ENCODE measurements at regions of chr3 and their contacts with region 1.

Region 1: DNA sequence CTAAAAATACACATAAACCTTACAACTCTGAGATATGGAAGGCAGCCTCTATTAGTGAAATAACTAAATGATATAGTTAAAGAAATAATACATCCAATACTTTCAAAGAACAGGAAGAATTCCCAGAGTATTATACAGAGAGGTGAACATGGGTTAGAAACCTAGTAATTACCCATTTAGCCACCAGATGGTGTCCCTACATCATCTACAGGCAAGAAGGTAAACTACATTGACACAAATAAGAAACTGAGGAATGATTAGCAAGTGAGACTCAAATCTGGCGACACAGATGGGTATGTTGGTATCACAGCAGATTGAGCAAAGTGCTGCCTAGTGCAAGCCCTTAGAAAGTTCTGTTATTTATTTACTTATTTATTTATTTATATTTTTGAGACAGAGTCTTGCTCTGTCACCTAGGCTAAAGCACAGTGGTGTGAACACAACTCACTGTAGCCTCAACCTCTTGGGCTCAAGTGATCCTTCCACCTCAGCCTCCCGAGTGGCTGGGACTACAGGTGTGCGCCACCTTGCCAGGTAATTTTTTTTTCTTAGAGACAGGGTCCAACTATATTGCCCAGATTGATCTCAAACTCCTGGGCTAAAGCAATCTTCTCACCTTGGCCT is 28.2 kb downstream of the NEK4 start:
- DNase-seq: no peak
- H3K4me3 ChIP-seq: no peak overlapping the region
- H3K27ac ChIP-seq: no peak overlapping the region
- H3K27me3 ChIP-seq: no peaks in the 10 kb centered on the region
- CTCF ChIP-seq: peak; percentile 71

Region 2: DNA sequence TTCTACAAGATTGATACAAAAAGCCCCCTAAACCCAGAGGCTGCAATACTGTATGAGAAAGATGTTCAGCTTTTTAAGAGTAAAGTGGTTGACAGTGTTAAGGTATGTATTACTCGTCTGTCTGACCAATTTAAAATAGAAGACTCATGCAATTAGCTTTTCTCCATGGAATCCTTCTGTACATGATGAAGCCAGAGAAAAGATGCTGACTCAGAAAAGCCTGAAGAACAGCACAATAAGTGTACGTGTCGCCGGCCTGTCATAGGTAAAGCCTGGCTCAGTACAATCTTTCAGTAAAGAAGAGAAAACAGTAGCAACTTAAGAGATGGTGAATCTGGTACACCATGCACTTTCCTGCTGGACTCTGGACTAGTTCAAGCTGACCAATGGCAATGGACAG is 11.8 kb after region 1 on chr3:
- CTCF ChIA-PET with region 1: no interaction called
- POLR2A ChIA-PET with region 1: no interaction called
- DNase-seq: no peak
- H3K4me3 ChIP-seq: no peak overlapping the region
- H3K27ac ChIP-seq: no peak overlapping the region
- H3K27me3 ChIP-seq: no peaks in the 10 kb centered on the region
- CTCF ChIP-seq: no peak

Region 3: DNA sequence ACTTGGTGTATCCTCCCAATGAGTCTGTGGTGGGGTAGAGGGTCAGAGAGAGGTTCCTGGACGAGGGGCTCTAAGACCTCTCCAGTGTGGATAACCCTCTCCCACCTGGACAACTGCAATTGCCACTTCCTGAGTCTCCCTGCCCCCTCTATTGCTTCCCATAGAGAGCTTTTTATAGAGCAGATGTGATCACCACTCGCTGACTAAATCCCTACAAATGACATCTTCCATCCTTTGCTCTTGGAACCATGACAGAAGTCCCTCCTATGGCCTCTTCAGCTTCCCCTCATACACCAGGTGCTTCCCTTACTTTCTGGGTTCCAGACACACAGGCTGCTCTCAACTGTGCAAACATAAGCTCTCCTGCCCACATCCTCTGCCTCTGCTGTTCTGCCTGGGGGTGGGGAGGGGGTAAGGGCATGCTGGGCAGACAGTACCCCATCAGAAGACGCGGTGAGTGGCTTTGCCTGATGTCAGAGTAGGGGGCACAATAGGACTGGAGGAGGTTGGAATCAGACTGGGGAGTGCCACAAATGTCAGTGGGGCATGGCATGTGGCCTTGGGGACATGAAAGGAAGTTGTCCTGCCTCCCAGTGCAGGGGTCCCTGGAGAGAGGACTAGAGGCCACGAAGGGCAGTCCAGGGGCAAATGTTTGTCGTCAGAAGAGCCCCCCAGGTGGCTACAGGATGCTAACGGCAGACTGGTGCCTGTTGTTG is 67.3 kb after region 1 on chr3:
- CTCF ChIA-PET with region 1: no interaction called
- POLR2A ChIA-PET with region 1: no interaction called
- DNase-seq: no peak
- H3K4me3 ChIP-seq: no peak overlapping the region
- H3K27ac ChIP-seq: no peak overlapping the region
- H3K27me3 ChIP-seq: peaks cover 32% of the 10 kb centered on the region
- CTCF ChIP-seq: no peak

Region 4: DNA sequence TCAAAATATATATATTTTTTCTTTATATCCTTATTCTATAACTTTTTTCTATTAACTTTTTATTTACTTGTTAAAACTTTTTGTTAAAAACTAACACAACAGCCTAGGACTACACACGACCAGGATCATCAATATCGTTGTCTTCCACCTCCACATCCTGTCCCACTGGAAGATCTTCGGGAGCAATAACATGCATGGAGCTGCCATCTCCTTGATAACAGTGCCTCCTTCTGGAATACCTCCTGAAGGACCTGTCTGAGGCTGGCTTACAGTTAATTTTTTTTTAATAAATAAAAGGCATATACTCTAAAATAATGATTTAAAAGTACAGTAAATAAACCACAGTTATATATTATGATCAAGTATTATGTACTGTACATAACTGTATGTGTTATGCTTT is 244.4 kb after region 1 on chr3:
- CTCF ChIA-PET with region 1: interaction called, 23 read pairs
- POLR2A ChIA-PET with region 1: no interaction called
- DNase-seq: peak; percentile 21
- H3K4me3 ChIP-seq: no peak overlapping the region
- H3K27ac ChIP-seq: no peak overlapping the region
- H3K27me3 ChIP-seq: no peaks in the 10 kb centered on the region
- CTCF ChIP-seq: peak; percentile 58

Measured in AG04450 (cell line).